ENCODE measurements at regions of chr3 and their contacts with region 1.

Region 1: DNA sequence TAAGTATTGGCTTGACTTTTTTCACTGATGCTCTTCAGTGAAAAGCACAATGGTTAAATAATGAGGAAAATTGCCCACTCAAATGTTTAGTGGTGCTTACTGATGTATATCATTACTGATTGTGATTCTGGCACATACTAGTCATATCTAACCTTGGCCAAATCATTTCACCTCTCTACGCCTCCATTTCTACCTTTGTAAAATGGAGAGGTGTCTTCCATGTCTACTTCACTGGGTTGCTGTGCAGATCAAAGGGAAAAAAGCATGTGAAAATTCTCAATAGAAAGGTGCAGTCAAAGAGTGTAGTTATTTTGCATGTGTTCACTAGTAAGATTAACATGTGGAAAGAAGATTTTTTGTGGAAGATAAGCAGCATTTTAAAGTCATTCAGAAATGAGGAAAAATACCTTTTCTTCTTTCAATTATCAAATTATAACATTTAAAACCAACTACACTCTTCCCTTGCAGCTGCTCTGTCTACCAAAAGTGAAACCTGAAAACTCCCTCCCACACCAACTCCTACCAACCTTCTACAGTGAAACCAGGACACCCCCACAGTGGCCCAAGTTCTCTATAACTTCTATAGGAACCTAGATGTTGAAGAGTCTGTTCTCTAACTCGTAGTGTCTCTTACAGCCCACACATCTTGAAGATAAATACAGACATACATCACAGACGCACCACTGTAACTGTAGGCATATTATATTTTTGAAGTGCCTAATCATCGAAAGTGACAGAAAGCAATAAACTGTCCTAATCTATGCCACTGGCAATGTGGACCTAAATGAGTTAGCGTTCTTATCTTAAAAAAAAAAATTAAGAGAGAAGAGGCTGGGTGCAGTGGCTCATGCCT is 1.4 kb downstream of the CD200R1 start:
- DNase-seq: peak; percentile 66
- H3K4me3 Mint-ChIP-seq: peak overlapping the region; percentile 70
- H3K27ac Mint-ChIP-seq: peak overlapping the region; percentile 52
- H3K4me1 Mint-ChIP-seq: peaks cover 82% of the 10 kb centered on the region
- H3K27me3 Mint-ChIP-seq: no peaks in the 10 kb centered on the region

Region 2: DNA sequence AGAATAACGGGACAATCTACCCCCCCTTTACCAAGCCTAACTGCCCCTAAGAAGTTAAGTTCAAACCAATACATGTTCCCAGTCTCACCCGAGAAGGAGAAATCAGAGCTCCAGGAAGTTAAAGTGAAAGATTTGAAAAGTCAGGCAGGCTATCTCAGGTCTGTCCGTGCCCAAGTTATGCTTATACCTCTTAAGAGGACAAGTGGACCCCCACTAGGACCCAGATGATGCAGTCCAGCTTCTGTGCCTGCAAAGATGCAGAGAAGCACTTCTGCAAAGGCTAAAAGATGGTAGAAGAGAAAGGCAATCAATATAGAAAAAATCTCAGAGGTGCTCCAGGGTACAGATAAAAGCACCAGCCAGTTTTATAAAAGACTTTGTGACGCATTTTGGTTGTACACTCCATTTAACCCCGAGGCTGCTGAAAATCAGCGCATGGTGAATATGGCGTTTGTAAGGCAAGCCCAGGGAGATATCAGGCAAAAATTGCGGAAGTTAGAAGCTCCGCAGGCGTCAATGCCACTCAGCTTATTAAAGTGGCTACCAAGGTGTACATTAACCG is 669.7 kb before region 1 on chr3:
- CTCF ChIA-PET with region 1: no interaction called
- intact Hi-C with region 1: loop called (anchors 5 kb)
- DNase-seq: peak; percentile 52
- H3K4me3 Mint-ChIP-seq: no peak overlapping the region
- H3K27ac Mint-ChIP-seq: no peak overlapping the region
- H3K4me1 Mint-ChIP-seq: no peaks in the 10 kb centered on the region
- H3K27me3 Mint-ChIP-seq: no peaks in the 10 kb centered on the region

Region 3: DNA sequence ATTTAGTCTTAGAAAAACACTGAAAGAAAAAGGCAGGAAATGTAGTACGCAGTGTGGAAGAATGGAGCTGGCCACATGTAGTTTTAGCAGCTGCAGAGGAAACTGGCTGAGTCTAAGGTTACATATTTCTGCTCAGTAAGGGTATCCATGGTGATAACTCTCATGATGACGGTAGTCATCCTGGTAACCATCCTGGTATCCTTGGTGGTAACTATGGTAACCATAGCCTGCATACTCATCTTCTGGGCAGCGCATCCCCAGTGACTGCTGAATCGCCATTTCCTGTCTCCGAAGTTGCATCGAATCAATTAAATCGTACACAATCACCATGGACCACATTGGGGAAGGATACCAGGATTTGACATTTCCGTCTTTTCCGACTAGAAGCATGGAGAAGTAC is 368.3 kb before region 1 on chr3:
- CTCF ChIA-PET with region 1: no interaction called
- intact Hi-C with region 1: no loop called
- DNase-seq: no peak
- H3K4me3 Mint-ChIP-seq: no peak overlapping the region
- H3K27ac Mint-ChIP-seq: no peak overlapping the region
- H3K4me1 Mint-ChIP-seq: peaks cover 19% of the 10 kb centered on the region
- H3K27me3 Mint-ChIP-seq: peaks cover 15% of the 10 kb centered on the region

Region 4: GRCh38 chr3:112619295-112619694 is 354.3 kb before region 1 on chr3:
- CTCF ChIA-PET with region 1: no interaction called
- intact Hi-C with region 1: no loop called
- DNase-seq: no peak
- H3K4me3 Mint-ChIP-seq: no peak overlapping the region
- H3K27ac Mint-ChIP-seq: no peak overlapping the region
- H3K4me1 Mint-ChIP-seq: no peaks in the 10 kb centered on the region
- H3K27me3 Mint-ChIP-seq: peaks cover 4% of the 10 kb centered on the region

Region 5: DNA sequence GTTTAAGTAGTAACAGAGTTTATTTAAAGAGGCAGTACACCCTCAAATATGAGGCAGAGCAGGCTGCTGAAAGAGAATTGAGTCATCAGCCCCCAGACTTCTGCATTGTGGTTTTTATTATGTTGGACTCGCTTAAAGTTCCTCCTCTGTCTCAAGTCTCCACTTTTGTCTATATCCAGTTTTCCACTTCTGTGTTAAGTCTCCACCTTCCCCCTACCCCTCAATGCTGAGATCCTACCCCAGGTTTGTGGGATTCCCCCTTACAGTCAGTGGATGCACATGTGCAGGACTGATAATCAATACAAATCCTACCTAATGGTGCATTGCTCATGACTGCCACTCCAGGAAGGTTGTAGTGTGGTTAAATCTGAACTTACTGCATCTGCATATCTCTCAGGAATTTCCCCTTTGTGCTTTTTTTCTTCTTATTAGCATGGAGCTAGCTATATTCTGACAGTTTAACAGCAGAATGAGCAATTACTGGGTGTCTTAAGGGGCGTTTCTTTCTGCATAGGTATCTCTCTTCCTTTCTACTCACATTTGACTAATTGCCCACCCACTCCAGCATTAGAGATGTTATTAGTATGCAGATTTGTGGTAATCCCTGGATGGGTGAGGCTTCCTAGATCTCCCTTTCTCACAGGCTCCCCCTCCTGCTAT is 115.0 kb before region 1 on chr3:
- CTCF ChIA-PET with region 1: no interaction called
- intact Hi-C with region 1: loop called (anchors 1 kb)
- DNase-seq: peak; percentile 22
- H3K4me3 Mint-ChIP-seq: peak overlapping the region; percentile 14
- H3K27ac Mint-ChIP-seq: peak overlapping the region; percentile 64
- H3K4me1 Mint-ChIP-seq: peaks cover 22% of the 10 kb centered on the region
- H3K27me3 Mint-ChIP-seq: no peaks in the 10 kb centered on the region

Region 6: DNA sequence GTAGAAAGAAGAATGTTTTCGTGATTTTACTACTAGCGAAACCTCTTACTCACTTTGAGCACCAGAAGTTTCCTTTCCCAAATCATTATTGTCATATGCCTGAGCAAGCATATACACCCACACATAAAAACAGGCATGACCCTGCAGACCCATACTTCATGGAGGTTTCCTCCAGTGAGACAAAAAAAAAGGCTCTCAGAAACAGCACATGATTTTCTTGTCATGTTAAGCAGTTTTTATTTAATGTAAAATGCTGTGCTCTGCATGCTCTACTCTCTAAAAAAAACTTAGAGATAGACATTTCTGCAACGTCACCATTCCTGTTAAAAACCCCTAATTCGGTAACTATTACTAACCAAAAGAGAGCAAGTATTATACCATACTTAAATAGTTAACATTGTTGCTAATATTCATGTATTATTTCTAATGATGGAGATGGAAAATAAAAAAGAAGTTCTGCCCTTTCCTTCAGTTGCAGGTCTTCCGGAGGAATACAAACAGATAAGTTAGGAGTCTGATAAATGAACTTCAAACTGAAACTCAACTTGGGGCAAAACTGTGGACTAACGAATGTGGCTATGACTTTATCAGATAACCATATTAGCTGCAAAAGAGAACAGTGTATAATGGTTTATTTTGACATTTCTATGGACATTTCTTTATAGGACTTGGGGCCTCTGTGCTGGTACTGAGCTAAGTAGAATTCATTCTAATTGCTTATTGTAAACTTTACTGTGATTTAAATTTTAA is 14.6 kb before region 1 on chr3:
- CTCF ChIA-PET with region 1: interaction called, 4 read pairs
- intact Hi-C with region 1: loop called (anchors 1 kb)
- DNase-seq: peak; percentile 31
- H3K4me3 Mint-ChIP-seq: peak overlapping the region; percentile 56
- H3K27ac Mint-ChIP-seq: no peak overlapping the region
- H3K4me1 Mint-ChIP-seq: peaks cover 35% of the 10 kb centered on the region
- H3K27me3 Mint-ChIP-seq: no peaks in the 10 kb centered on the region

Region 7: GRCh38 chr3:112990672-112991602 is 17.4 kb after region 1 on chr3 and contains the start of gene GTPBP8:
- CTCF ChIA-PET with region 1: interaction called, 9 read pairs
- intact Hi-C with region 1: loop called (anchors 1 kb)
- DNase-seq: peak; percentile 94
- H3K4me3 Mint-ChIP-seq: peak within 1 kb of the TSS; percentile 94
- H3K27ac Mint-ChIP-seq: peak within 1 kb of the TSS; percentile 96
- H3K4me1 Mint-ChIP-seq: peaks cover 68% of the 10 kb centered on the region
- H3K27me3 Mint-ChIP-seq: no peaks in the 10 kb centered on the region
- total RNA-seq, gene GTPBP8: 62.8 to 68.9 TPM

Region 8: DNA sequence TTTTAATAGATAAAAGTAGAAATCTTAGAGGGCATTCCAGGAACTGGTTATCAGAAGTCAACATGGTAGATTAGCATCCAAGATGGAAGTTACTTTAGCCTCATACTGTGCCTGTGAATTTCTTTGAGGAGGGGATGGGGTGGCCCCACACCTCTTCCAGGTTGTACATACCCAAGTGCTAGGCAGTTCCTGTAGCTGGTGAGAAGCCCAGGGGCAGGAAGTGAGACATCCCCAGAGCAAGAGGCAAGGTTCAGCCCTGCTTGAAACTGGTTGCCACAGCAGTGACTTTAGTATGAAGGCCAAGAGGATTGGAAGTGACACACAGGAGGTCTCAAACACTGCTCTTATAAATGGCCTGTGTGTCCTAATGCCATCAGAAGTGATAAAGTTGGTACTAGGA is 29.1 kb after region 1 on chr3:
- CTCF ChIA-PET with region 1: interaction called, 8 read pairs
- intact Hi-C with region 1: loop called (anchors 1 kb)
- DNase-seq: peak; percentile 90
- H3K4me3 Mint-ChIP-seq: peak overlapping the region; percentile 42
- H3K27ac Mint-ChIP-seq: peak overlapping the region; percentile 95
- H3K4me1 Mint-ChIP-seq: peaks cover 86% of the 10 kb centered on the region
- H3K27me3 Mint-ChIP-seq: no peaks in the 10 kb centered on the region

Measured in activated naive CD4-positive, alpha-beta T cell treated with anti-CD3 and anti-CD28 coated beads for 36 hours (primary cell).